CD8-positive, alpha-beta T cell (primary cell): ENCODE measurements at regions of chr11 and their contacts with region 1.

Region 1: DNA sequence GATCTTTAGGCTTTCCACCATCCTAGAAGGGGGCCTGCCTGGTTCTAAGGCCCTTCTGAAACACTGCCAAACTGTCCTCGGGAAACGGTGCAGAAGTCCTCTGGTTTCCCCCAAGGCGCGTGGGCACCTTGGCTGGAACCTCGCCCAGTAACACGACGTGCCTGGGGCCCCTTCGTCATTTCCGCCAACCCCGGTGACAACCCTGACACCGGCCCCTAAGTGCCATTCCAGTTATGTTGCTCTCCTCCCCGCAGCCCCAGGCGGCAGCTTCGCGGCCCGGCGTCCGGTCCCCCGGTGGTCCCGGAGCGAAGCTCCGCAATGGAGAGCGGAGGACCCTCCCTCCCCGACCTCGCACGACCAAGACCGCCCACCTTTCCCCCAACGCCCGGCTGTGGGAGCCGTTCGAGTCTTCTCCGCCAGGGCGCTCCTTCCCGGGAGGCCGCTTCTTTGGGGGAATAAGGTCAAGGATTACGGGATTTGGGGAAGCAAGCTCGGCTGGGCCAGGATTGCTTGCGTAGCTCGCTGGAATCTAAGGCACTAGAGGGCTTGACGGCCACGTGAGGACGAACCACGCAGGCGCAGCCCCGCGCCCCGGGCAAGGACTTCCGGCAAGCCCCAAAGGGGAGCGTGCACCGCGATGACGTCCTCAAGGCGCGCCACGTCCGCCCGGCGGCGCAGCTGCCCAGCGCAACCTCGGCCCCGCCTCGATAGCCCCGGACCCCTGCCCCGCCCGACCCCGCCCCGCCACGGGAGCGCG is 626 bp downstream of the RNH1 start:
- DNase-seq: peak; percentile 93 to 99 (median 98)
- ATAC-seq: peak; percentile 67
- H3K4me3 ChIP-seq: peak overlapping the region; percentile 93 to 99
- H3K4me3 Mint-ChIP-seq: peak overlapping the region; percentile 97
- H3K27ac ChIP-seq: peak overlapping the region; percentile 99 to 100
- H3K27ac Mint-ChIP-seq: peak overlapping the region; percentile 99
- H3K4me1 ChIP-seq: peaks cover 36% of the 10 kb centered on the region
- H3K4me1 Mint-ChIP-seq: peaks cover 25% of the 10 kb centered on the region
- H3K27me3 ChIP-seq: no peaks in the 10 kb centered on the region
- H3K27me3 Mint-ChIP-seq: no peaks in the 10 kb centered on the region
- CTCF ChIP-seq: no peak

Region 2: DNA sequence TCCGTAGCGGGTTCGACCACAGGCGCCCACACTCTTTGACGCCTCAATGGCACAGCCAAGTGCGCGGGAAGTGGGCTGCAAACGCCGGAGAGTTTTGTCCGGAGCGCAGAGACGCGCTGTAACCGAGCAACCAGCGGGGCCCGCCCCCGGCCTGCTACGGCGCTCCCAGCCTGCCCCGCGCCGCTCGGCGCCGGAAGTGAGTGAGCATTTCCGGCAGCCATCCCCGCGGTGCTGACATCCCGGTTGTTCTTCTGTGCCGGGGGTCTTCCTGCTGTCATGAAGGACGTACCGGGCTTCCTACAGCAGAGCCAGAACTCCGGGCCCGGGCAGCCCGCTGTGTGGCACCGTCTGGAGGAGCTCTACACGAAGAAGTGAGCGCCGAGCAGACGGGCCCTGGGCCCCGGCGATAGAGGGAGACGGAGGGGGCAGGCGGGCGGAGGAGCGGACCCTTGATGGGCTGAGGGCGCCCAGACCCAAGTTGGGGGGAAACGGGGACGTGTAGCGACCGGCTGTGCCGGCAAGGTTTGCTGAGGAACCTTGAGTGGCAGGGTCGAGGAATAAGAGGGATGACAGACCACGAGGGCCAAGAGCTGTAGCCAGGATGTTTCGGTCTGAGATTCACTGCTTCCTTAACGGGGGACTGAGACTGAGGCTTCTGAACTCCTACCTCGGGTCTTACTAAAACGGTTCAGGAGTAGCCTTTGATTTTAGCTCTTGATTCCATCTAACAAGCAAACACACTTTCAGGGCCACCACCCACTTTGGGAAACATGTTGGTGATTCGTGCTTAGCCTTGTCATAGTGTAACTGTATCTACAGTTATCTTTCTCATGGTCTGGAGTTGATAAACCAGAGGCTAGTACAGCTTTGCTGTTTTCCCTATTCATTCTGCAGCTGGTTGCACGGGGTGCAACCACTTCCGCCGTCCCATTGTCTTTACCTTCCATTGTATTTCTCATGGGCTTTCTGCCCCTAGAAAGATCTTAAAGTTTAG is 269.3 kb before region 1 on chr11 and contains the start of gene PSMD13:
- CTCF ChIA-PET with region 1: no interaction called
- POLR2A ChIA-PET with region 1: interaction called, 3 read pairs
- intact Hi-C with region 1: loop called in 1 of 2 experiments (anchors 1 kb)
- DNase-seq: peak; percentile 74 to 94 (median 88)
- ATAC-seq: peak; percentile 72
- H3K4me3 ChIP-seq: peak within 1 kb of the TSS; percentile 83 to 100
- H3K4me3 Mint-ChIP-seq: peak within 1 kb of the TSS; percentile 96
- H3K27ac ChIP-seq: peak within 1 kb of the TSS; percentile 99 to 100
- H3K27ac Mint-ChIP-seq: peak within 1 kb of the TSS; percentile 99
- H3K4me1 ChIP-seq: peaks cover 24% of the 10 kb centered on the region
- H3K4me1 Mint-ChIP-seq: peaks cover 59% of the 10 kb centered on the region
- H3K27me3 ChIP-seq: no peaks in the 10 kb centered on the region
- H3K27me3 Mint-ChIP-seq: no peaks in the 10 kb centered on the region
- CTCF ChIP-seq: no peak
- total RNA-seq, gene PSMD13: 74.3 to 82.8 TPM

Region 3: GRCh38 chr11:406978-407739 is 99.3 kb before region 1 on chr11:
- CTCF ChIA-PET with region 1: no interaction called
- POLR2A ChIA-PET with region 1: interaction called, 9 read pairs
- intact Hi-C with region 1: loop called (anchors 1 to 2 kb)
- DNase-seq: peak; percentile 89 to 99 (median 94)
- ATAC-seq: peak; percentile 86
- H3K4me3 ChIP-seq: peak overlapping the region in 1 of 2 experiments; percentile 19
- H3K4me3 Mint-ChIP-seq: no peak overlapping the region
- H3K27ac ChIP-seq: peak overlapping the region; percentile 46 to 73
- H3K27ac Mint-ChIP-seq: peak overlapping the region; percentile 82
- H3K4me1 ChIP-seq: peaks cover 25% of the 10 kb centered on the region
- H3K4me1 Mint-ChIP-seq: peaks cover 17% of the 10 kb centered on the region
- H3K27me3 ChIP-seq: no peaks in the 10 kb centered on the region
- H3K27me3 Mint-ChIP-seq: no peaks in the 10 kb centered on the region
- CTCF ChIP-seq: no peak

Region 4: GRCh38 chr11:469684-470560 is 36.5 kb before region 1 on chr11:
- CTCF ChIA-PET with region 1: no interaction called
- POLR2A ChIA-PET with region 1: no interaction called
- intact Hi-C with region 1: no loop called
- DNase-seq: no peak
- ATAC-seq: no peak
- H3K4me3 ChIP-seq: no peak overlapping the region
- H3K4me3 Mint-ChIP-seq: no peak overlapping the region
- H3K27ac ChIP-seq: no peak overlapping the region
- H3K27ac Mint-ChIP-seq: no peak overlapping the region
- H3K4me1 ChIP-seq: no peaks in the 10 kb centered on the region
- H3K4me1 Mint-ChIP-seq: no peaks in the 10 kb centered on the region
- H3K27me3 ChIP-seq: no peaks in the 10 kb centered on the region
- H3K27me3 Mint-ChIP-seq: no peaks in the 10 kb centered on the region
- CTCF ChIP-seq: no peak

Region 5: DNA sequence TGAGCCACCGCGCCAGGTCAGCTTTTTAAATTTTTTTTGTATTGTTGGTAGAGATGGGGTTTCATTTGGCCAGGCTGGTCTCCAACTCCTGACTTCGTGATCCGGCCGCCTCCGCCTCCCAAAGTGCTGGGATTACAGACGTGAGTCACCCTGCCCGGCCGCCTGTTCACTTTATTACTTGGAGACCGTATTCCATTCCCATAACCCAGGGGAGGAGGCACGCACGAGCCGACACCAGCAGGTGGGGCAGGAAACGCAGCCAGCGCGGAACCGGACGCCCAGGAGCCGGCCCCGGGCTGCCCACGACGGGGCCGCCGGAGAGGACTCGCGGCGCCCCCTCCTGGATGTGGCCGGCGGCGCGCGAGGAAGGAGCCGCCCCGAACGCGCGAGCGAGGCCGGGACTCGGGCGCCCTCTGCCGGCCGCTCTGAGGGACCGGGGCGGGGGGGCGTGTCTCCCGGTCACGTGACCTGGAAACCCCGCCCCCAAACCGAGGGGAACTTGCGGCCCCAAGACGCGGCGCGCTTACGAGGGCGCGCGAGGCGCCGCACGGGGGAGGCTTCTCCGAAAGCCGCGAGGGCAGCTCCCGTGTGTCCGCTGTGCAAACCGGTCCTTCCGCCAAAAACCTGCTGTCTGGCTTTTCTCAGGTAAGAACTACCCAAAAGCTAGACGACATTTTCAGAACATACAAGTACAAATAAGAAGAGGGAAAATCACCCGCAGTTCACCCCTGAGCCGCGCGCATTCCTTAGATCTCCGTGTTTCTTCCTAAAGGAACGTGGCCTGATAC is 12.2 kb after region 1 on chr11:
- CTCF ChIA-PET with region 1: interaction called, 7 read pairs
- POLR2A ChIA-PET with region 1: no interaction called
- intact Hi-C with region 1: loop called (anchors 1 kb)
- DNase-seq: peak; percentile 82 to 98 (median 92)
- ATAC-seq: peak; percentile 95
- H3K4me3 ChIP-seq: peak overlapping the region; percentile 43 to 46
- H3K4me3 Mint-ChIP-seq: peak overlapping the region; percentile 79
- H3K27ac ChIP-seq: peak overlapping the region in 1 of 2 experiments; percentile 59
- H3K27ac Mint-ChIP-seq: peak overlapping the region; percentile 81
- H3K4me1 ChIP-seq: peaks cover 4% of the 10 kb centered on the region
- H3K4me1 Mint-ChIP-seq: peaks cover 5% of the 10 kb centered on the region
- H3K27me3 ChIP-seq: no peaks in the 10 kb centered on the region
- H3K27me3 Mint-ChIP-seq: no peaks in the 10 kb centered on the region
- CTCF ChIP-seq: peak; percentile 99

Region 6: GRCh38 chr11:575996-576768 is 69.8 kb after region 1 on chr11 and contains the start of gene PHRF1:
- CTCF ChIA-PET with region 1: no interaction called
- POLR2A ChIA-PET with region 1: interaction called, 5 read pairs
- intact Hi-C with region 1: loop called in 1 of 2 experiments (anchors 1 kb)
- DNase-seq: peak; percentile 91 to 98 (median 96)
- ATAC-seq: peak; percentile 88
- H3K4me3 ChIP-seq: peak within 1 kb of the TSS; percentile 89 to 93
- H3K4me3 Mint-ChIP-seq: peak within 1 kb of the TSS; percentile 98
- H3K27ac ChIP-seq: peak within 1 kb of the TSS; percentile 84 to 95
- H3K27ac Mint-ChIP-seq: peak within 1 kb of the TSS; percentile 96
- H3K4me1 ChIP-seq: peaks cover 46% of the 10 kb centered on the region
- H3K4me1 Mint-ChIP-seq: peaks cover 54% of the 10 kb centered on the region
- H3K27me3 ChIP-seq: no peaks in the 10 kb centered on the region
- H3K27me3 Mint-ChIP-seq: peaks cover 2% of the 10 kb centered on the region
- CTCF ChIP-seq: no peak
- total RNA-seq, gene PHRF1: 43.2 to 44.9 TPM